Psoas muscle (tissue), 8 donors: ENCODE measurements at regions of chr2 and their contacts with region 1.

Region 1: DNA sequence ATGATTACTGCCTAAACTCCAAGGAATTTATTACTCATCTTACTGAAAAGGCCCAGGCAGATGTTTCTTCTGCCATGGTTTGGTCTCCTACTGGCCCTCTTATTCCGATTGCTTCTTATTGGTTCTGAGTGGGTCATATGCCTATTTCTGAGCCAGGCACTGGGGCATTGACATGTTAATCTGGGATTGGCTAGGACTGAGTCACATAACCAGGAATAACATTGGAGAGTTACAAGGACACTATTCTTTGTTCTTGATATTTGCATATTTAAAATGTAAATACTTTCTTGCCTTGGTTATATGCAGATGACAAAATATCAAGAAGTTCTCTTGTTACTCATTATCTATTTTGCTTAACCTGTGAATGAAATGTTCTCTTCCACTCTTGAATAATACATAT is 534.4 kb upstream of the SLC39A10 start:
- DNase-seq: no peak
- ATAC-seq: no peak
- H3K4me3 ChIP-seq: no peak overlapping the region
- H3K27ac ChIP-seq: no peak overlapping the region
- H3K4me1 ChIP-seq: no peaks in the 10 kb centered on the region
- H3K27me3 ChIP-seq: no peaks in the 10 kb centered on the region
- CTCF ChIP-seq: no peak

Region 2: DNA sequence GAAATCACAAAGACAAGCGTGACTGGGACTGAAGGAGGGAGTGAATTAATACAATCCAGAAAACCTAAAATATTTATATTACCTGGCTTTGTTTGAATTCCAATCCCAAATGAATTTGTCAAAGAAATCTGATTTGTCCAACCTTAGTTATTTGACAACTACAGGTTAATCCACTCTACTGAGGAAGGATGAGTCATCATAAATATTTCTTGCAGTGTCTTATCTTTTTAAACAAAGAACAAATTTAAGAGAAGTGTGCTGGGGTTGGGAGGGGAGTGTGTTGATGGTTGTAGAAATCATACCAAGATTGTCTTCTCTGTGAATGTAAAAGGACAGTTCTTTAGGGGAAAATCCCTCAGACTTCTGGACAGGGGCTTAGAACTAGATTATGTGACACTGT is 571.9 kb before region 1 on chr2:
- intact Hi-C with region 1: no loop called
- DNase-seq: no peak
- ATAC-seq: no peak
- H3K4me3 ChIP-seq: no peak overlapping the region
- H3K27ac ChIP-seq: no peak overlapping the region
- H3K4me1 ChIP-seq: no peaks in the 10 kb centered on the region
- H3K27me3 ChIP-seq: no peaks in the 10 kb centered on the region
- CTCF ChIP-seq: no peak

Region 3: DNA sequence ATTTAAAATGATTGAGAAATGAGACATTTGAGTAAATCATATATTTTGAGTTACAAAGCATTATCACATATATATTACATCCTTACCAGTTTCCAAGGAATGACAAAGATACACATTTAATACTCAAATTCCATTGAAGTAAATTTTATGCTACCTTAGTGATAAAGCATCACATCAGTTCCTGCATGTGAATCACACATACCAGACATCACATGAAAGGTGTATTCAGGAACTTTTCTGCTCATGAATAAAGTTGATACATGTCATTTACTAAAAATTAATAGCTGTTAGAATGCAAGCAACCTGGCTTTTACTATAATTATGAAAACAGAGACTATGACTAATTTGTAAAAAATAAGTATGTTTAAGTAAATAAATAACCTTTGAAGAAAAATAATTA is 14.5 kb before region 1 on chr2:
- intact Hi-C with region 1: loop called in 1 of 2 experiments (anchors 2 kb)
- DNase-seq: no peak
- ATAC-seq: no peak
- H3K4me3 ChIP-seq: no peak overlapping the region
- H3K27ac ChIP-seq: no peak overlapping the region
- H3K4me1 ChIP-seq: no peaks in the 10 kb centered on the region
- H3K27me3 ChIP-seq: no peaks in the 10 kb centered on the region
- CTCF ChIP-seq: no peak